AG04449 (cell line): ENCODE measurements at regions of chr1 and their contacts with region 1.

Region 1: DNA sequence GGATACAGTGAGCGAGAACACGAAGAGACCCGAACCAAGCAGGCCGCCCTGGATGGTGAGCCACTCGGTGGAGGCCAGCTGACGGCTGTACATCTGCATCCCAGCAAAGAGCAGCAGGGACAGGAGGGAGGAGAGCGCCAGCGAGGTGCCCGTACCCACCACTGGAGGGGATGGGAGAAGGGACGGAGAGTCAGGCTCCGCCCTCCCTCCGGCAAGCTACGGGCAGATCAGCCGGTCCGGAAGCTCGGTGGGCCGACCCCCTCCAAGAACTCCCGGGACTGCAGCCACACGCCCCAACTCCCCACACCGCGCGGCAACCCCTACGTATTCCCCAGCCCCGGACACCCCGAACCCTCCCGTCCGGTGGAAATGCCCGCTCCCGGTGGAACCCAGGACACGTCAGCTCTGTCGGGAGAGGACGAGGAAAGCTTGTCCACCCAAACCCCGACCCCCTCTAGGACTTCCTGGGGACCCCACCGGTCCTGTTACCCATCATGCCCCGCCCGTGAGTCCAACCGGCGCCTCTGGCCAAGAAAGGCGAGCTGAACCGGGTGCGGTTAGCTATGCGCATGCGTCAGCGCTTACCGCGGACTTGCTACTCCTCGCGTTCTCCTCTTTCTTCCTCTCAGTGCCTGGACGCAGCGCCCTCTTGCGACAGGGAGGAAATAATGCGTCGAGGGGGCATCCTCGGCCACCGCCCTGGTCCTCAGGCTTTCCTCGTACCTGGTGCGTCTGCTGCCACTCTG is at the start of gene KRTCAP2:
- DNase-seq: peak; percentile 75
- H3K4me3 ChIP-seq: peak within 1 kb of the TSS; percentile 98
- CTCF ChIP-seq: peak; percentile 96

Region 2: DNA sequence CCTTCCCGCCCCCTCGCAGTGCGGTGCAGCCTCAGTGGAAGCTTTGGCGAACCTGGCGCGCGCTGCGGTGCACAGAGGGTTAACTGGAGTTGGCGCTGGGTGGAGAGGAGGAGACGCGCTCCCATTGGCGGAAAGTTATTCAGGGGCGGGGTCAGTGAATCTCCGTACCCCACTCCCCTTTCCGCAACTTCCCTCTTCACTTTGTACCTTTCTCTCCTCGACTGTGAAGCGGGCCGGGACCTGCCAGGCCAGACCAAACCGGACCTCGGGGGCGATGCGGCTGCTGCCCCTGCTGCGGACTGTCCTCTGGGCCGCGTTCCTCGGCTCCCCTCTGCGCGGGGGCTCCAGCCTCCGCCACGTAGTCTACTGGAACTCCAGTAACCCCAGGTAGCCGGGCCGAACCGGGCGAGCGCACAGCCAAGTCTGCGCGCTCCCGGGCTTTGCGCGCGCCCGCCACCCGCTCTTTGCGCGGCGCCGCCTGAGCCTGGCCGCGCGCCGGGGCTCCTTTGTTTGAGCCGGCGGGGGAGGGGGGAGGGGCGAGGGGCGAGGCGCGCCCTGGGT is 109.3 kb before region 1 on chr1 and contains the start of gene EFNA4:
- CTCF ChIA-PET with region 1: interaction called, 18 read pairs
- POLR2A ChIA-PET with region 1: no interaction called
- DNase-seq: no peak
- H3K4me3 ChIP-seq: peak within 1 kb of the TSS; percentile 96
- CTCF ChIP-seq: no peak

Region 3: DNA sequence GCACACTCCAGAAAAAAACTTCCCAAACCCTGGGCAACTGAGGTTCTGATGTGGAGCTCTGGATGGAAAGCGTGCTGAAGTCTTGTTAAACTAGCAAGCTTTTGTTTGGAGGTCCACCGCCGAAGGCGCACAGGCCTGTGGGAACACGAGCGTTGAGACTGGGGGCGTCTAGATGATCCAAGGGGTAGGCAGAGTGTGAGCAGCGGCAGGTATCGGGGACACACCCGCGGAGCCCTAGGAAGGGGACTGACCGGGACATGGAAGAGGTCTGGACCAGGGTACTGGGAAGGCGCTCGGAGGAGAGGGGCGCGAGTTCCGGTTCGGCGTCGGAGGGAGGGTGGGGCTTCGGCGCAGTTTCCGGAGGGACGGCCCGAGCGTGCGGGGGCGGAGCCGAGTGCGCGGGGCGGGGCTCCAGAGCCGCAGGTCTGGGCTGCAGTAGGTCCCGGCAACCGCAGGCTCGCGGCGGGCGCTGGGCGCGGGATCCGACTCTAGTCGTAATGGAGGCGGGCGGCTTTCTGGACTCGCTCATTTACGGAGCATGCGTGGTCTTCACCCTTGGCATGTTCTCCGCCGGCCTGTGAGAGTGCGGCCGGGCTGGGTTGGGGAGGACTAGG is 37.4 kb before region 1 on chr1 and contains the start of gene SLC50A1:
- CTCF ChIA-PET with region 1: interaction called, 16 read pairs
- POLR2A ChIA-PET with region 1: interaction called, 6 read pairs
- DNase-seq: peak; percentile 46
- H3K4me3 ChIP-seq: peak within 1 kb of the TSS; percentile 94
- CTCF ChIP-seq: no peak

Region 4: GRCh38 chr1:155158979-155159378 is 13.9 kb before region 1 on chr1:
- CTCF ChIA-PET with region 1: interaction called, 29 read pairs
- POLR2A ChIA-PET with region 1: no interaction called
- DNase-seq: no peak
- H3K4me3 ChIP-seq: no peak overlapping the region
- CTCF ChIP-seq: no peak

Region 5: DNA sequence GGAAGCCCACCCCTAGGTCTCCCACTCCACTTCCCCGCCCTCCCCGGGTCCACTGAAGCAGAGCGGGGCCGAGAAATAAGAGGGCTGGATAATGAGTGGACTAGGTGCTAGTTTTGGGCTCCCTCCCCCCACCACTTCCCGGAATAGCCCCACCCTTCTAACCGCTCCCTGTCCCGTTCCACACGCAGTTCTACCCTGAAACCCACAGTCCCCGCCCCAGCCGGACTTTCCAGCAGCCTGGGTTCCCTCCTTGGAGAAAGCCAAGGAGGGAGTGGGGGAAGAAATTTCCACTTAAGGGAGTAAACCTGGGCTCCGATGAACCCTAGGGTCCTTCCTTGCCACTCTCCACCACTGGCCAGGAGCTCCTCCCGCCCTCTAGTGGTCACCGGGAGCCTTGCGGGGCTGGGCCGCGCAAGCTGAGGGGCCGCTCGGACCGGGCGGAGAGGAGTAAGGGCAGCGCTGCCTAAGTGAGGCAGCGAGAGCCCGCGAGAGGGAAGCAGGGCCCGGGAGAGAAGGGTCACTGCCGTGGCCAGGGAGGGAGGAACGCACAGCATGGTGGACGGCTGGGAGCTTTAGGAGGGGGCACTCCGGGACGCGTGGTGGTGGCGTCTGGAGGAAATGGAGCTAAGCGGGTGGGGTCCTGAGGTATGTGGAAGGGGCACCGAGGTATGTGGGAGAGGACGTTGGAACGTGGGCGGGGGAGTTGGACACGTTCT is 20.5 kb after region 1 on chr1:
- CTCF ChIA-PET with region 1: interaction called, 123 read pairs
- POLR2A ChIA-PET with region 1: interaction called, 17 read pairs
- DNase-seq: no peak
- H3K4me3 ChIP-seq: peak overlapping the region; percentile 66
- CTCF ChIP-seq: peak; percentile 99

Region 6: DNA sequence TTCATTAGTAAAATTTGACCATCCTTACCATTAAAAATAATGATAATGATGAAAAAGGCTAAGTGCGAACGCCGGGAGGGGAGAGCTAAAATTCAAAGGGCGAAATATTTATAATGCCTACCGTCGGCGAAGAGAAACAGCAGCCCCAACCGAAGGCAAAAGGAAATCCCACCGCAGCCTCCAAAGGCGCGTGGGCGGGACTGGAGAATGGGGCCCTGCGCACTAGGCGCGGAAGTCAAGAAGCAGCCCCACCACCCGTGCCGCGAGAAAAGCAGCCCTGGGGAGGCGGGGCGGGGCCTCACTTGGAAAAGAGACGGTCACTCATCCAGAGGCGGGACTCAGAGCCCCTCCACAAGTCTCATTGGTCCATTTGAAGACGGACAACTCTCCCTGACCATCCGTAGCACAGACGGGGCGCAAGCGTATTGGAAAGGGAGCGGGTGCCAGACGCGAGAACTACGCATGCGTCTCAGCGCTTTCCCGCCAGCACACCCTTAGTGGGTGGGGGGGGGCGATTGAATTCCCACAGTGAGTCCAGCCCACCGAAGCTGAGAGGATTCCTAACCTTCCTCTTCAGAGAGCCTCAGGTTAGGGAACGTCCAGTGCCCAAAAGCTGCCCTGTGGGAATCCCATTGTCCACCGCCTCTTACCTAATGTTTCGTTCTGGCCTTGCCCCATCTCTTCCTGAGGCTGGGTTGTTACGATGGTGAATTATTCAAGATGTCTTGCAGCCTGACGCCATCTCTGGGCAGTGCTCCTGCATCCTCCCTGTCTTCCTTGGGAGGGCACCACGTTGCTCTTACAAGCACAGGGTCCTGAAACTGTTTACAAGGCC is 54.6 kb after region 1 on chr1:
- CTCF ChIA-PET with region 1: interaction called, 45 read pairs
- POLR2A ChIA-PET with region 1: interaction called, 5 read pairs
- DNase-seq: peak; percentile 94
- H3K4me3 ChIP-seq: peak overlapping the region; percentile 77
- CTCF ChIP-seq: no peak